Panc1 (cell line): ENCODE measurements at regions of chr19 and their contacts with region 1.

Region 1: GRCh38 chr19:6728346-6728745 is 7.9 kb upstream of the C3 start:
- DNase-seq: no peak
- ATAC-seq: no peak
- H3K4me3 ChIP-seq: no peak overlapping the region
- H3K27ac ChIP-seq: no peak overlapping the region
- H3K4me1 ChIP-seq: no peaks in the 10 kb centered on the region
- H3K27me3 ChIP-seq: no peaks in the 10 kb centered on the region
- CTCF ChIP-seq: no peak

Region 2: DNA sequence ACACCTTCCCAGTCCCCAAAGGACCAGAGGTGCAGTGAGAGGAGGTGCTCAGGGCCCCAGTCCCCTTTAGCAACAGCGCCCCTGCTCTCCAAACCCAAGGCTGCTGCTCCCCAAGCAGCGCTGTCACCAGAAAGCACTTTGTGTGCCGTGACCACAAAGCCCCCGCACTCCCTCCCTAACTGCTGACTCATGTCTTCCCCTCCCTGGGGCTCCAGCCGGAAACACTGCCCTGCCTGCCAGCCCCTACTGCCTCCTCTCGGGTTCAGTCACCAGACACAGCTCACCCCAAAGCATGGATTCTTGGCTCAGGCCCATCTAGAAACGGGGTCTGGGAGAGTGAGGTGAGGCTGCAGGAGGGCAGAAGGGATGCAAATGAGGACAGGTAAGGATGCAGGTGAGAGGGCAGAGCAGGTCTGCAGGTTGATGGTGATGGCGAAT is 53.5 kb before region 1 on chr19:
- CTCF ChIA-PET with region 1: interaction called, 10 read pairs
- POLR2A ChIA-PET with region 1: no interaction called
- in situ Hi-C with region 1: no loop called
- intact Hi-C with region 1: no loop called
- DNase-seq: no peak
- ATAC-seq: no peak
- H3K4me3 ChIP-seq: no peak overlapping the region
- H3K27ac ChIP-seq: no peak overlapping the region
- H3K4me1 ChIP-seq: no peaks in the 10 kb centered on the region
- H3K27me3 ChIP-seq: no peaks in the 10 kb centered on the region
- CTCF ChIP-seq: no peak

Region 3: DNA sequence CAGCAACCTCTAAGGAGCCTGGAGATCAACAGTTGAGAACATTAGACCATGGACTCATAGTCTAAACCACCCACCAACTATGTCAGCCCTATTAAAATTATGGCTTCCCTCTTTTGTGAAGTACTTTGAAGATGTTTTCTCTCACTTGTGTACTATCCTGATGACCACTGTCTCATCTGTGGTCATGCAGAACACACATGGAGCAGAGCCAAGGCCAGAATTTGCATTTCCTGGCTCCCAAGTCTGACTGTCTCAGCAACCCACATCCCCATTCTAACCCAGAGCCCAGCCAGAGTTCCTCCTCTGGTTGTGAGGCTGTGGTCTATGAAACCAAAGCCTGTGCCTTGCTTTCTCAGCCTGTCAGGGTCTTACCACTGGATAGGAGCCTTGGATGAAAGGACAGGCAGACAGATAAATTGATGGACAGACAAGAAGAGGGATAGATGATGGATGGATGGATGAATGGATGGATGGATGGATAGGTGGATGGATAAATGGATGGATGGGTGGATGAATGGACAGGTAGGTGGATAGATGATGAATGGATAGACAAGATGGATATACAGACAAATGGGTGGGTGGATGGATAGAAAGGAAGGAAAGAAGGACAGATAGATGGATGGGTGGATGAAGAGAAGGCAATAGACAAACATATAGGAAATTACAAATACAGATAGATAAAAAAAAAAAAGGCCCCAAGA is 376.6 kb after region 1 on chr19:
- CTCF ChIA-PET with region 1: no interaction called
- POLR2A ChIA-PET with region 1: no interaction called
- in situ Hi-C with region 1: no loop called
- intact Hi-C with region 1: no loop called
- DNase-seq: no peak
- ATAC-seq: no peak
- H3K4me3 ChIP-seq: no peak overlapping the region
- H3K27ac ChIP-seq: no peak overlapping the region
- H3K4me1 ChIP-seq: no peaks in the 10 kb centered on the region
- H3K27me3 ChIP-seq: no peaks in the 10 kb centered on the region
- CTCF ChIP-seq: no peak